ENCODE measurements at regions of chrX and their contacts with region 1.

Region 1: GRCh38 chrX:38803586-38804431 is 2.5 kb downstream of the MID1IP1 start:
- DNase-seq: peak; percentile 72
- ATAC-seq: peak; percentile 88
- H3K4me3 ChIP-seq: peak overlapping the region; percentile 57 to 87 (median 84); a peak in 5 of 6 replicates
- H3K27ac ChIP-seq: peak overlapping the region; percentile 95
- H3K4me1 ChIP-seq: peaks cover 38% of the 10 kb centered on the region
- H3K27me3 ChIP-seq: no peaks in the 10 kb centered on the region; a peak in 1 of 5 replicates
- CTCF ChIP-seq: no peak
- EP300 ChIP-seq: peak; percentile 57 to 80; a peak in 2 of 4 replicates
- POLR2A ChIP-seq: peak in 1 of 2 experiments; percentile 96; a peak in 2 of 4 replicates
- RAD21 ChIP-seq: peak; percentile 38; the same call in 1 of the 2 replicates

Region 2: GRCh38 chrX:38347136-38347535 is 456.7 kb before region 1 on chrX:
- CTCF ChIA-PET with region 1: no interaction called
- POLR2A ChIA-PET with region 1: no interaction called
- in situ Hi-C with region 1: no loop called
- intact Hi-C with region 1: loop called (anchors 5 kb)
- DNase-seq: no peak
- ATAC-seq: no peak
- H3K4me3 ChIP-seq: no peak overlapping the region
- H3K27ac ChIP-seq: no peak overlapping the region
- H3K4me1 ChIP-seq: peaks cover 75% of the 10 kb centered on the region
- H3K27me3 ChIP-seq: no peaks in the 10 kb centered on the region
- CTCF ChIP-seq: no peak
- EP300 ChIP-seq: no peak
- POLR2A ChIP-seq: no peak
- RAD21 ChIP-seq: no peak

Region 3: DNA sequence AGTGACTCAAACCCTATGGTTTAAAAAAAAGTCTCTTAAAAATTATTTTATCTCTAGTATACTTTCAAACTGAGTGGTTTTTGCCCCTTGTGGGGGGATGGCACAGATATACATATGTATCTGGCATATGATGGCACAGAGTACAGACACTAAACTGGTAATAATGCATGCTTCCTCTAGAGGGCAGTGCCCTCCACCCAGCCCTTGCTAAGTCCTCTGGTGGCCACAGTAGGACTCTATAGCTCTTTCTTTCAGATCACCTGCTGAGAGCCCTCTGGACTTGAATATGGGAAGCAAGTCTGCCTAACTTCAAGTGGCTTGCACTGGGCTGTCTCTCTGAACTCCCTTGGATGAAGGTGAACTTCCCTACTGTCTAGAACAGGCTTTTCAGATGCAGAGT is 176.1 kb before region 1 on chrX:
- CTCF ChIA-PET with region 1: no interaction called
- POLR2A ChIA-PET with region 1: no interaction called
- in situ Hi-C with region 1: no loop called
- intact Hi-C with region 1: loop called (anchors 1 kb)
- DNase-seq: peak; percentile 45
- ATAC-seq: peak; percentile 99
- H3K4me3 ChIP-seq: no peak overlapping the region
- H3K27ac ChIP-seq: no peak overlapping the region
- H3K4me1 ChIP-seq: no peaks in the 10 kb centered on the region
- H3K27me3 ChIP-seq: no peaks in the 10 kb centered on the region
- CTCF ChIP-seq: peak; percentile 74
- EP300 ChIP-seq: no peak
- POLR2A ChIP-seq: no peak
- RAD21 ChIP-seq: peak; percentile 53

Region 4: DNA sequence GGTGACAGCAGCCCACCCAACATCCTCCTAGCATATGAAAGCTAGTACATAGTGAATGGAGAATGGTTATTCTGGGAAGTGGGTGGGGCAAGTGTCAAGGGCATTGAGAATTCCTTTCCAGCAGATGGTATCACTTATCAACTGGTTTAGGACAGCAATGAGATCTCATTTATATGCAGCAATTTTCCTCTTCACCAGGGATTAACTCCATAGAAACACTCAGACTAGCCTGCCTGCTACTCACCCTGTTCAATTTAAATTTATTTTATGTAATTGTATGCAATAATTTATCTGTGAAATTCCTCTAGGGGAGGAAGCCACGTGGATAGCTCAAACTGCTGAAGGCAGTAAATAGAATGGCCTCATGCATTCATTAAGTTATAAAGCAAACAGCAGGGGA is 104.1 kb before region 1 on chrX:
- CTCF ChIA-PET with region 1: no interaction called
- POLR2A ChIA-PET with region 1: no interaction called
- in situ Hi-C with region 1: no loop called
- intact Hi-C with region 1: no loop called
- DNase-seq: no peak
- ATAC-seq: no peak
- H3K4me3 ChIP-seq: no peak overlapping the region
- H3K27ac ChIP-seq: no peak overlapping the region
- H3K4me1 ChIP-seq: no peaks in the 10 kb centered on the region
- H3K27me3 ChIP-seq: no peaks in the 10 kb centered on the region
- CTCF ChIP-seq: no peak
- EP300 ChIP-seq: no peak
- POLR2A ChIP-seq: no peak
- RAD21 ChIP-seq: no peak

Region 5: GRCh38 chrX:38891641-38892413 is 88.0 kb after region 1 on chrX:
- CTCF ChIA-PET with region 1: no interaction called
- POLR2A ChIA-PET with region 1: interaction called, 7 read pairs
- in situ Hi-C with region 1: no loop called
- intact Hi-C with region 1: loop called (anchors 2 kb)
- DNase-seq: no peak
- ATAC-seq: peak; percentile 40; the same call in 1 of the 3 replicates
- H3K4me3 ChIP-seq: no peak overlapping the region
- H3K27ac ChIP-seq: no peak overlapping the region
- H3K4me1 ChIP-seq: peaks cover 26% of the 10 kb centered on the region
- H3K27me3 ChIP-seq: no peaks in the 10 kb centered on the region
- CTCF ChIP-seq: no peak
- EP300 ChIP-seq: no peak
- POLR2A ChIP-seq: no peak
- RAD21 ChIP-seq: no peak

Region 6: GRCh38 chrX:38985375-38985774 is 181.6 kb after region 1 on chrX:
- CTCF ChIA-PET with region 1: no interaction called
- POLR2A ChIA-PET with region 1: interaction called, 11 read pairs
- in situ Hi-C with region 1: loop called (anchors 25 kb)
- intact Hi-C with region 1: loop called (anchors 2 kb)
- DNase-seq: no peak
- ATAC-seq: no peak
- H3K4me3 ChIP-seq: no peak overlapping the region
- H3K27ac ChIP-seq: no peak overlapping the region
- H3K4me1 ChIP-seq: peaks cover 56% of the 10 kb centered on the region
- H3K27me3 ChIP-seq: no peaks in the 10 kb centered on the region
- CTCF ChIP-seq: no peak
- EP300 ChIP-seq: no peak
- POLR2A ChIP-seq: no peak
- RAD21 ChIP-seq: no peak

Region 7: DNA sequence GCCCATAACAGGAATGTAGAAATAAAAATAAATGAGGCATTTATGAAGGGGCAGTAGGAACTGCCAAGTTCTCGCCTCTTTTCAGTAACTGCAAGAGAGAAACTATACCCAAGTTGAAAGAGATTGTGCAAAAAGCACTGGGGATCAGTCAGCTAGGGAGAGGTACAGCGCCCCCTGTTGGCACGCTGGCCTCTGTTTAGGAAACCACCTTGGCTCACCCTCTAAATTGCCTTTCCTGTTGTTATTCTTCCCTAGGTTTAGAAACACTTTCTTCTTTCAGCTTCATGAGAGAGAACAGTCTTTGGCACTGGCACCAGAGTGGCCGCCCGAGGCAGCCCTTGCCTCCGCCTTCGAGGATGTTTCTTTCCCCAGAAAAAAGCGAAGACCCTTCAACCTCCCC is 346.0 kb after region 1 on chrX:
- CTCF ChIA-PET with region 1: no interaction called
- POLR2A ChIA-PET with region 1: interaction called, 3 read pairs
- in situ Hi-C with region 1: no loop called
- intact Hi-C with region 1: loop called (anchors 1 kb)
- DNase-seq: peak; percentile 3
- ATAC-seq: peak; percentile 64
- H3K4me3 ChIP-seq: no peak overlapping the region
- H3K27ac ChIP-seq: no peak overlapping the region
- H3K4me1 ChIP-seq: peaks cover 8% of the 10 kb centered on the region; the same call in 1 of the 2 replicates
- H3K27me3 ChIP-seq: no peaks in the 10 kb centered on the region
- CTCF ChIP-seq: peak; percentile 68
- EP300 ChIP-seq: no peak
- POLR2A ChIP-seq: no peak
- RAD21 ChIP-seq: 0 out of 2 replicates have a peak, but pooled peaks have one; percentile 25